ENCODE measurements at regions of chr11 and their contacts with region 1.

Region 1: GRCh38 chr11:122101625-122102291 is 14.3 kb downstream of the BLID start:
- DNase-seq: peak; percentile 85

Region 2: DNA sequence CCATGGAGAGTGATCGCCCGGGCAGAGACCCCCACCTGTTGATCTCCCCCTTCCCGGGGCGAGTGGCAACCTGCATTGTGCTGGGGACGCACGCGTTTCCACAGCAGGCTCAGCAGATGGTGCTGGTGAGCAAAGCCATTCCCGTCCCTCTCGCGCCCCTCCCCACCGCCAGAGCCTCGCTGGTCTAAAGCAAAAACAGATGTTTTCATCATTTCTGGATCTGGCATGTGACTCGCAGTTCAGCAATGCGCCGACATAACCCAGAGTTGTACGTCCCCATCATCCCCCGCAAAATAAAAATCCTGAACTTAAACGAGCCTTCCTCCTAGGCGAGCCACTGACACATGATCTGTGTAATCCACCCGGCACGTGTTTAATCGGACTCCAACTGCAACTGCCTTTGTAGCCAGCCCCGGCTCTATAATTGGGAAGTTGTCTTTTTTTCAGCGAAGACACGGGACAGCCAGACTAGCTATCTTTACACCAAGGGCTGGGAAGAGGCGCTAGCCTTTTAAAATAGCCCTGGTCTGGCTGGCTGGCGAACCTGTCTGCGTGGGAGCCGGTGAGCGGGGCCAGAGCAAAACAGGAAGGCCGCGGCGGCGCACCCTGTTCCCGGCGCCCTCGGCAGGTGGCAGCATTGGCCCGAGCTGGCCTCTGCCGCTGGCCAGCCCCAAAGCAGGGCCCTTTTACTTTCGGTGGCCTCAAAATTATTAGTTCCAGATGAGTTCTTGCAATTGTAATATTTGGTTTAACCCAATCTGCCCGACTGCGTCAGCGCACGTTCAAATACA is 446.0 kb before region 1 on chr11:
- intact Hi-C with region 1: loop called (anchors 5 to 10 kb)
- DNase-seq: peak; percentile 97